ENCODE measurements at regions of chr5 and their contacts with region 1.

Region 1: GRCh38 chr5:150544611-150545219 is 36.8 kb downstream of the NDST1 start:
- DNase-seq: peak in 1 of 2 donors; percentile 78
- H3K4me3 ChIP-seq: no peak overlapping the region
- H3K27ac ChIP-seq: peak overlapping the region; percentile 73 to 90
- H3K4me1 ChIP-seq: peaks cover 6 to 21% of the 10 kb centered on the region in 2 donors
- H3K27me3 ChIP-seq: no peaks in the 10 kb centered on the region
- CTCF ChIP-seq: peak; percentile 58 to 62 (median 61)

Region 2: GRCh38 chr5:150503977-150504620 is 40.6 kb before region 1 on chr5:
- intact Hi-C with region 1: loop called (anchors 5 kb)
- DNase-seq: no peak
- H3K4me3 ChIP-seq: no peak overlapping the region
- H3K27ac ChIP-seq: peak overlapping the region; percentile 86 to 91
- H3K4me1 ChIP-seq: peaks cover 25 to 94% of the 10 kb centered on the region in 2 donors
- H3K27me3 ChIP-seq: no peaks in the 10 kb centered on the region
- CTCF ChIP-seq: no peak

Measured in ascending aorta (tissue), 2 donors.